Psoas muscle (tissue), 8 donors: ENCODE measurements at regions of chr18 and their contacts with region 1.

Region 1: GRCh38 chr18:11937874-11938478 is 29.9 kb upstream of the MPPE1 start:
- DNase-seq: peak; percentile 74 to 84
- ATAC-seq: peak; percentile 69 to 92 (median 82)
- H3K4me3 ChIP-seq: no peak overlapping the region
- H3K27ac ChIP-seq: no peak overlapping the region
- H3K4me1 ChIP-seq: no peaks in the 10 kb centered on the region
- H3K27me3 ChIP-seq: no peaks in the 10 kb centered on the region
- CTCF ChIP-seq: peak; percentile 92

Region 2: DNA sequence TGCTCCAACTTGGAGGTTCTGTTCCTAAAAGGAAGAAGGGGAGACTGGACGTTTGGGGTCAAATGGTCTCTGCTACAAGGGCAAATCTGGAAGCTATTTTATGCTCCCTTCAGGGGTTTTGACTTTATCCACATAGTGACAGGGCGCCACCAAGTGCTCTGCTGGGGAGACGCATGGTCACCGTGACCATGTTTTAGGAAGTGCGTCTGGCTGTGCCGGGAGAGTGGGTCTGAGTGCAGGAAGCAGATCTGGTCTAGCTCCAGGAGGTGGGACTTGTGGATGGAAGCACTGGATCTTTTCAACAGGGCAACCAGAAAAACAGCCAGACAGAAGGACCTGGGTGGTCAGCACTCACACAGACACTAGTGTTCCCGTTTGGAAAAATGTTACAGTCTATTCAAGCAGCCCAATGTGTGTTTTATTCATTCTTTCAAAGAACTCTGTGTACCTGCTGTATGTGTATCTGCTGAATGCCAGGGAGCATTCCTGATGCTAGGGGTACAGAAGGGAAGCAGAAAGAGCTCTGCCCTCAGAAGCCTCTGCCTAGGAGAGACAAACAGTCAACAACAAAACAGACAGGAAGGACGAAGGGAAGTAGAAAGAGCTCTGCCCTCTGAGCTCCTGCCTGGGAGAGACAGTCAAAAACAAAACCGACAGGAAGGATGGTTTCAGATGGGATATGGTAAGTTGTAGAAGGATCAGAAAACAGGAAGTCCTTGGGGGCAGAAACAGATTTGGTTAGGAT is 57.6 kb after region 1 on chr18:
- intact Hi-C with region 1: loop called (anchors 1 to 2 kb)
- DNase-seq: peak; percentile 73 to 87
- ATAC-seq: peak; percentile 56 to 72 (median 69)
- H3K4me3 ChIP-seq: no peak overlapping the region
- H3K27ac ChIP-seq: peak overlapping the region; percentile 86
- H3K4me1 ChIP-seq: peaks cover 50% of the 10 kb centered on the region
- H3K27me3 ChIP-seq: no peaks in the 10 kb centered on the region
- CTCF ChIP-seq: peak; percentile 73